ENCODE measurements at regions of chr16 and their contacts with region 1.

Region 1: GRCh38 chr16:12819126-12820117 is 15.7 kb upstream of the CPPED1 start:
- DNase-seq: peak; percentile 65
- ATAC-seq: peak; percentile 62 to 73

Region 2: GRCh38 chr16:12002447-12003006 is 816.9 kb before region 1 on chr16:
- intact Hi-C with region 1: no loop called
- DNase-seq: peak; percentile 40
- ATAC-seq: peak in 1 of 2 donors; percentile 71

Region 3: GRCh38 chr16:12455287-12455798 is 364.1 kb before region 1 on chr16:
- intact Hi-C with region 1: loop called (anchors 5 kb)
- DNase-seq: peak; percentile 68
- ATAC-seq: peak; percentile 78

Region 4: GRCh38 chr16:13093661-13094060 is 274.2 kb after region 1 on chr16:
- intact Hi-C with region 1: no loop called
- DNase-seq: no peak
- ATAC-seq: no peak